ENCODE measurements at regions of chr2 and their contacts with region 1.

Region 1: GRCh38 chr2:84925724-84926376 is 20.4 kb downstream of the TMSB10 start:
- DNase-seq: peak; percentile 100
- H3K4me3 Mint-ChIP-seq: peak overlapping the region; percentile 82
- H3K27ac Mint-ChIP-seq: peak overlapping the region; percentile 93
- H3K4me1 Mint-ChIP-seq: peaks cover 41% of the 10 kb centered on the region
- H3K27me3 Mint-ChIP-seq: no peaks in the 10 kb centered on the region

Region 2: GRCh38 chr2:84459018-84459943 is 466.6 kb before region 1 on chr2 and contains the start of gene SUCLG1:
- CTCF ChIA-PET with region 1: interaction called, 11 read pairs
- POLR2A ChIA-PET with region 1: interaction called, 4 read pairs
- intact Hi-C with region 1: loop called (anchors 1 kb)
- DNase-seq: peak; percentile 91
- H3K4me3 Mint-ChIP-seq: peak within 1 kb of the TSS; percentile 98
- H3K27ac Mint-ChIP-seq: peak within 1 kb of the TSS; percentile 90
- H3K4me1 Mint-ChIP-seq: peaks cover 40% of the 10 kb centered on the region
- H3K27me3 Mint-ChIP-seq: no peaks in the 10 kb centered on the region
- total RNA-seq, gene SUCLG1: 70.3 to 70.4 TPM

Region 3: DNA sequence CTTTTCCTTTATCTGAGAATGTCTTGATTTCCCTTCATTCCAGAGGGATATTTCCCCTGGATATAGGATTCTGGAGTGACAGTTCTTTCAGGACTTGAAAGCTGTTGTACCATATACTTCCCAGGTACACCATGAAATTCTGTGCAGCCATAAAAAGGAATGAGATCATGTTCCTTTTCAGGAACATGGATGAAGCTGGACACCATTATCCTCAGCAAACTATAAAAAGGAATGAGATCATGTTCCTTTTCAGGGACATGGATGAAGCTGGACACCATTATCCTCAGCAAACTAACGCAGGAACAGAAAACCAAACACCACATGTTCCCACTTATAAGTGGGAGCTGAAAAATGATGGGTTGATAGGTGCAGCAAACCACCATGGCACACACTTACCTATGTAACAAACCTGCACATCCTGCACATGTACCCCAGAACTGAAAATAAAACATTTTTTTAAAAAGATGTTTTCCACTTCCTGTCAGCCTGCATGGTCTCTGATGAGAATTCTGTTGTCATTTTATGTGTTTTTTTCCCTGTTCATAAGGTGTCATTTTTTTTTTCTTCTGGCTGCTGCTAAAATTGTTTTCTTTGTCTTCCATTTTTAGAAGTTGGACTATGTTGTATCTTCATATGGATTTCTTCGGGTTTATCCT is 276.2 kb before region 1 on chr2:
- CTCF ChIA-PET with region 1: interaction called, 6 read pairs
- POLR2A ChIA-PET with region 1: no interaction called
- intact Hi-C with region 1: loop called (anchors 5 kb)
- DNase-seq: no peak
- H3K4me3 Mint-ChIP-seq: no peak overlapping the region
- H3K27ac Mint-ChIP-seq: peak overlapping the region; percentile 7
- H3K4me1 Mint-ChIP-seq: peaks cover 59% of the 10 kb centered on the region
- H3K27me3 Mint-ChIP-seq: no peaks in the 10 kb centered on the region

Region 4: DNA sequence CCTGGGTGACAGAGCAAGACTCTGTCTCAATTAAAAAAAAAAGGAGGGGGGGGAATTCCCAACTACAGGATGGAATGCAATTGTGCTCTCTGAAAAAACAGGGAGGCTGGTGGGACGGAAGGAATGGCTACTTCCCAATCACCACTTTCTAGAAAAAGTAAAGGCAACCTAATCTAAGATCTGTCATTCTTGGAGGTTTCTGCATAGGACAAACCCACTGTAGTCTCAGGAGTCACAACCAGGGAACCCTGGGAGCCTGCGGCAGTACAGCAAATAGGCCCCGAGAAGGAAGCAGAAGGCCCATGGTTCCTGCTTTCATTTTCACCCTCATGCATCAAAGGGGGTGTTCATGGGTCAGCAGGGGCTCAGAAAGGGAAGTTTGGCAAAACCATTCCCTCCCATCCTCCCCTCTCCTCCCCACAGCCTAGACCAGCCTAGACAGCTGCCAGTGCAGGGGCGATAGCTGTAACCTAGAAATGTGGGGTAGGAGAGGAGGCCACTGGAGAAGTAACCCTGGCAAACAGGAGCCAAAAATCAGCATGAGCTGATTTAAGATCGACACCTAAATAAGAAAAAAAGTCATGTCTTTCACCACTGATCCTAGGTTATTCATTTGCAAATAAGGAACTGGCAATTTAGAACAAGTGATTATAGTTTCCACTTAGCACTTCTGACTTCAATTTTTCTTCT is 92.9 kb before region 1 on chr2:
- CTCF ChIA-PET with region 1: interaction called, 10 read pairs
- POLR2A ChIA-PET with region 1: no interaction called
- intact Hi-C with region 1: no loop called
- DNase-seq: peak; percentile 48
- H3K4me3 Mint-ChIP-seq: peak overlapping the region; percentile 63
- H3K27ac Mint-ChIP-seq: peak overlapping the region; percentile 79
- H3K4me1 Mint-ChIP-seq: peaks cover 45% of the 10 kb centered on the region
- H3K27me3 Mint-ChIP-seq: no peaks in the 10 kb centered on the region

Region 5: DNA sequence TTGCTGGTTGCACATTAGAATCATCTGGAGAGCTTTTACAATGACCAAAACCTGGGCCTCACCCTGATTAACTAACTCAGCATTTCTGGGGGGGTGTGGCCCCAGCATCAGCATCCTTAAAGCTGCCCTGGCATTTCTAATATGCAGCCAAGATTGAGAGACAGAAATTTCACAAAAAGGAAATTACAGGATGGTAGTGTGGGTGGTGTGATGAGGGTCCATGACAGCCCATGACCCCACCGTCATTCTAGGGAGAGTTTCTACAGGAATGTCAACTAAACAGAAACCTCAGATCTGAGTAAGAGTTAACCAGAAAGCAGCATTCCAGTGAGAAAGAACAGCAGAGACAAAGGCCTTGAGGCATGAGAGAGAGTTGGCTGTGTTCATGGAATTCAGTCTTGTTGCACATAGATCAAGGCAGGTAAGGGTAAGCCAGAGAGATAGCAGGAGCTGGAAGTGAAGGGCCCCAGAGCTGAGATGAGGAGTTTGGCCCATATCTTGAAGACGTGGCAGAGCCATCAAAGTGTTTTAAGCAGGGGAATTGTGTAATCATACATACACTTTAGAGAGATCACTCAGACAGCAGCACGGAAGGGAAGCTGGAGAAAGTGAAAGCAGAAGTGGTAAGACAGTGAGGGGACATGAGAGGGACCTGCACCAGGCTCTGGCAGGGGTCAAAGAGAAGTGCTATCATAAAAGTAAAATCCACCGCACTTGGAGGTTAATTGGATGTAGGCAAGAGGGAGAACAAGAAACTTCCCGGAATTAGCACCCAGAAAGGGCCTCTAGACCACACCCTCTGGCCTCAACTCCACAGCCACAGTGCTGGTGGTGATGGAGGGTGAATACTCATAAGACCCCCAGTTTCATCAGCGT is 37.2 kb before region 1 on chr2:
- CTCF ChIA-PET with region 1: interaction called, 119 read pairs
- POLR2A ChIA-PET with region 1: interaction called, 12 read pairs
- intact Hi-C with region 1: no loop called
- DNase-seq: peak; percentile 71
- H3K4me3 Mint-ChIP-seq: peak overlapping the region; percentile 58
- H3K27ac Mint-ChIP-seq: peak overlapping the region; percentile 90
- H3K4me1 Mint-ChIP-seq: peaks cover 47% of the 10 kb centered on the region
- H3K27me3 Mint-ChIP-seq: no peaks in the 10 kb centered on the region

Region 6: GRCh38 chr2:84939426-84940087 is 13.7 kb after region 1 on chr2:
- CTCF ChIA-PET with region 1: interaction called, 181 read pairs
- POLR2A ChIA-PET with region 1: interaction called, 28 read pairs
- intact Hi-C with region 1: loop called (anchors 1 kb)
- DNase-seq: peak; percentile 87
- H3K4me3 Mint-ChIP-seq: peak overlapping the region; percentile 62
- H3K27ac Mint-ChIP-seq: peak overlapping the region; percentile 93
- H3K4me1 Mint-ChIP-seq: peaks cover 66% of the 10 kb centered on the region
- H3K27me3 Mint-ChIP-seq: no peaks in the 10 kb centered on the region

Region 7: DNA sequence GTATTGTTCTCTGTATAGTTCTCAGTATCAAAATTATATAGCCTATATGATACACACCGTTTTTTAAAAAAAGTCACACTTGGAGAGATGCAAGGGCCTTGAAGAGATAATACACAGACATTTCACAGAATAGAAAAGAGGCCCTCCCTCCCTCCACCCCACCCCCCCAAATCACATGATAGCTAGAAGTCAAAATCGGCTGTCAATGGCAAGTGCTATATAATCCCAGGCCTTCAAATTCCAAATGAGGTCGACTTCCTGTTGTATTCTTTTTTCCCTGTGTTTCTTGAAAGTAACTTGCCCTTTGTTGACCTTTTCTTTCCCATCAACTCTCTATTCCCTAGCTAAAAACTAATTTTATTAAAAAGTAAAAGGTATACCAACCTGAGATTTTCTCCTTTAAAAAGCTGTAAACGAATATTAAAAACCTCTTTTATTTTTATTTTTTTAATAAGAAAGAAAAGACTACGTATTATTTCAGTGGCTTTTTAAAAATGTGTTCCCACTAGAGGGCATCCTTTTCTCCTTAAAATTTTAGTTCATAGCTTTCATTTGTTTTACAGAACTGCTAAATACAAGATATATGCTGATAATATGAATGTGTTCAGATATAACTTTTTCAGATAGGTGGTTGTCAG is 91.7 kb after region 1 on chr2:
- CTCF ChIA-PET with region 1: interaction called, 25 read pairs
- POLR2A ChIA-PET with region 1: interaction called, 4 read pairs
- intact Hi-C with region 1: loop called (anchors 1 kb)
- DNase-seq: no peak
- H3K4me3 Mint-ChIP-seq: no peak overlapping the region
- H3K27ac Mint-ChIP-seq: peak overlapping the region; percentile 66
- H3K4me1 Mint-ChIP-seq: peaks cover 70% of the 10 kb centered on the region
- H3K27me3 Mint-ChIP-seq: no peaks in the 10 kb centered on the region

Region 8: GRCh38 chr2:85037135-85037534 is 111.3 kb after region 1 on chr2:
- CTCF ChIA-PET with region 1: no interaction called
- POLR2A ChIA-PET with region 1: no interaction called
- intact Hi-C with region 1: no loop called
- DNase-seq: no peak
- H3K4me3 Mint-ChIP-seq: no peak overlapping the region
- H3K27ac Mint-ChIP-seq: no peak overlapping the region
- H3K4me1 Mint-ChIP-seq: peaks cover 3% of the 10 kb centered on the region
- H3K27me3 Mint-ChIP-seq: no peaks in the 10 kb centered on the region